Caco-2 (cell line): ENCODE measurements at regions of chr1 and their contacts with region 1.

Region 1: DNA sequence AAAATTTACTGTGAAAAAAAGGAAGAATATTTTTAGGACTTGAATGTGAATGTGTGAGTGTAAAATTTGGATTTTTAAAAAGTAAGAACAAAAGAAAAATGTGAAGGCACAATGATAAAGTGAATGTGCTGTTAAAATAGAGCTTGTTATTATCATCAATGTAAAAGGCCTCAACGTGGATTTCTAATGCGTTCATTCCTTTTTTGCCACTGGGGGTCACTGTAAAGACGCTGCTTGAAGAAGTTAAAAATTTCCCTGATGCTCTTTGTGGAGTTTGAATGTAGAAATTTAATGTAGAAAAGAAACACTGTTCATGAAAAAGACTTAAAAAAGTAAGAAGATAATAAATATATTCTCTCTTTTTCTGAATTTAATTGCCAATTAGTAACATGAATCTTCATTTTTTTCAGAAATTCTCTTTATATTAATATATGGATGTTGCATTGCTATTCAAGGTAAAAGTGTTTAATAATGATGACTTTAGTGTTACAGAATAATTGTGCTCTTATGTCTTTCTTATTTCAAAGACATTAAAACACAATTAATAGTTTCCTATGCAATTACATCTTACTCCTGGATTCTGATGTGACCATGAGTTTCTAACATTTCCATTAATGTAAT is 161.5 kb downstream of the DNM3 start:
- DNase-seq: peak; percentile 32 to 51
- H3K4me3 ChIP-seq: no peak overlapping the region
- H3K4me3 Mint-ChIP-seq: no peak overlapping the region
- H3K27ac Mint-ChIP-seq: no peak overlapping the region
- H3K4me1 ChIP-seq: peaks cover 13% of the 10 kb centered on the region
- H3K4me1 Mint-ChIP-seq: no peaks in the 10 kb centered on the region
- H3K27me3 ChIP-seq: no peaks in the 10 kb centered on the region
- H3K27me3 Mint-ChIP-seq: no peaks in the 10 kb centered on the region
- CTCF ChIP-seq: peak; percentile 67 to 69

Region 2: DNA sequence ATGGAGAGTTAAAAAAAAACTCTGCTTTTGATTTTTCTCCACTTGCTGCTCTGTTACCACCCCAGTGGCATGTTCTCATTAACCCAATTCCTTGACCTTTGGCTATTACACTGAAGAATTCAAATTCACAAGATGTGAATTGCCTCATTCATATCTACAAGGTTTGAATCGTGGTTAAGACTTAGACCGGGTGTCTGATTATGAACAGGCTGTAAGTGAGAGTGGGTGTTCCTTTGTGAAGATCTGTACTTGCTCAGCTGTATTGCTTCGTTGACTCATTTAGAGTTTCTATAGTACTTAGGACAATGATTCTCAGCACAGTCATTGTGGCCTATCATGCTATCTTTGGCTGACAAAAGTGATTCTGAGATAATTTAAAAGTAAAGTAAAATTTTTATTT is 125.1 kb before region 1 on chr1:
- CTCF ChIA-PET with region 1: no interaction called
- POLR2A ChIA-PET with region 1: no interaction called
- intact Hi-C with region 1: no loop called
- DNase-seq: no peak
- H3K4me3 ChIP-seq: no peak overlapping the region
- H3K4me3 Mint-ChIP-seq: no peak overlapping the region
- H3K27ac Mint-ChIP-seq: no peak overlapping the region
- H3K4me1 ChIP-seq: no peaks in the 10 kb centered on the region
- H3K4me1 Mint-ChIP-seq: no peaks in the 10 kb centered on the region
- H3K27me3 ChIP-seq: no peaks in the 10 kb centered on the region
- H3K27me3 Mint-ChIP-seq: no peaks in the 10 kb centered on the region
- CTCF ChIP-seq: no peak

Region 3: DNA sequence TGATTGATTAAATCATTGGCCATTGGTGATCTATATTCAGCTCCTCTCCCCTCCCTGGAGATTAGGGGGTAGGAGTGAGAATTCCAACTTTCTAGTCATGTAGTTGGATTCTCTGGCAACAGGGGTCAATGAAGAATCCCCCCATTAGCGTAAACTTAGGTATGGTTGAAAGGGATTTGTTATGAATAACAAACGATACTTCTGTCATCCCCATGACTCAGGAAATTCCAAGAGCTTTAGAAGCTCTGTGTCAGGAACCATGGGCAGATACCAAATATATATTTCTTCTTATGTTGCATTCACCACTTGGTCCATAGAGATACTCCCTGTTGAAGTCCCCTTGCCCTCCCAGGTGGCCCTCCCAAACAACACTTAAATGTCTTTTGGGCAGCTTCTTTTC is 37.1 kb before region 1 on chr1:
- CTCF ChIA-PET with region 1: no interaction called
- POLR2A ChIA-PET with region 1: no interaction called
- intact Hi-C with region 1: no loop called
- DNase-seq: no peak
- H3K4me3 ChIP-seq: no peak overlapping the region
- H3K4me3 Mint-ChIP-seq: no peak overlapping the region
- H3K27ac Mint-ChIP-seq: no peak overlapping the region
- H3K4me1 ChIP-seq: 0 out of 2 replicates have a peak, but pooled peaks cover 6% of the 10 kb centered on the region
- H3K4me1 Mint-ChIP-seq: no peaks in the 10 kb centered on the region
- H3K27me3 ChIP-seq: no peaks in the 10 kb centered on the region
- H3K27me3 Mint-ChIP-seq: no peaks in the 10 kb centered on the region
- CTCF ChIP-seq: no peak

Region 4: DNA sequence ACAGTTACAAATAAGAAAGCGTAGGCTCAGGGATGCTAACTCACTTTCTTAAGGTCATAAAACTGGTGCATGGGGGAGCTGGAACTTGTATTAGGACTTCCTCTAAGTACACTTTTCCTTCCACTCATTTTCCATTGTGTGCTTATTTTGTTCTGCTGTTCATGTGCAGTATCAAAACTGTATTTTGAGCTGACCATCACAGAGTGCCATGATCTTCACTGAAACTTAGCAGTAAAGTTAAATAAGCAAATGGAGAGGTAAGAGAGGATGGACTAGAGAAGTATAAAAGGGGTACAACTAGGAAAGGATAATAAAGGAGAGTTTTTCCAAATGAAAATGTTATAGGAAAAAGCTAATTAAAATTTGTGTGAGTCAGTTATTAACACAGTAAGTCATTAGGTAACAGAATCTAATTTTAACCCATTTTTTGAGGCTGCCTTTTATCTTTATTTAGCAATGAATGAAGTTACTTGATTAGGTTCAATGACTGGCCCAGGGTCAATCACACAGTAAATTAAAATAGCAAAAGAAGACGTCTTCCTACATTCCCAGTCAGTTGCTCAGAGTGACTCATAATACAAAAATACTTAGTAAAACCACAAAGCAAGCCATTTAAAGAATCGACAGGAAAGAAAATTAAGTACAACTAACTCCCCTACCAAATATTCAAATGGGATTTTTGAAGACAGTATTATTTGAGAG is 251.8 kb after region 1 on chr1:
- CTCF ChIA-PET with region 1: no interaction called
- POLR2A ChIA-PET with region 1: no interaction called
- intact Hi-C with region 1: loop called (anchors 10 kb)
- DNase-seq: no peak
- H3K4me3 ChIP-seq: no peak overlapping the region
- H3K4me3 Mint-ChIP-seq: no peak overlapping the region
- H3K27ac Mint-ChIP-seq: no peak overlapping the region
- H3K4me1 ChIP-seq: no peaks in the 10 kb centered on the region
- H3K4me1 Mint-ChIP-seq: no peaks in the 10 kb centered on the region
- H3K27me3 ChIP-seq: no peaks in the 10 kb centered on the region
- H3K27me3 Mint-ChIP-seq: peaks cover 3% of the 10 kb centered on the region
- CTCF ChIP-seq: no peak

Region 5: GRCh38 chr1:172443626-172444453 is 441.0 kb after region 1 on chr1 and contains the start of gene PIGC:
- CTCF ChIA-PET with region 1: no interaction called
- POLR2A ChIA-PET with region 1: no interaction called
- intact Hi-C with region 1: loop called (anchors 5 kb)
- DNase-seq: peak; percentile 90 to 93
- H3K4me3 ChIP-seq: peak within 1 kb of the TSS; percentile 93
- H3K4me3 Mint-ChIP-seq: peak within 1 kb of the TSS; percentile 77
- H3K27ac Mint-ChIP-seq: peak within 1 kb of the TSS; percentile 87
- H3K4me1 ChIP-seq: peaks cover 31% of the 10 kb centered on the region
- H3K4me1 Mint-ChIP-seq: peaks cover 25% of the 10 kb centered on the region
- H3K27me3 ChIP-seq: no peaks in the 10 kb centered on the region
- H3K27me3 Mint-ChIP-seq: no peaks in the 10 kb centered on the region
- CTCF ChIP-seq: peak; percentile 87 to 88
- total RNA-seq, gene PIGC: 23.7 and 26.1 TPM in 2 replicates